Gastrocnemius medialis (tissue), 4 donors: ENCODE measurements at regions of chr1 and their contacts with region 1.

Region 1: DNA sequence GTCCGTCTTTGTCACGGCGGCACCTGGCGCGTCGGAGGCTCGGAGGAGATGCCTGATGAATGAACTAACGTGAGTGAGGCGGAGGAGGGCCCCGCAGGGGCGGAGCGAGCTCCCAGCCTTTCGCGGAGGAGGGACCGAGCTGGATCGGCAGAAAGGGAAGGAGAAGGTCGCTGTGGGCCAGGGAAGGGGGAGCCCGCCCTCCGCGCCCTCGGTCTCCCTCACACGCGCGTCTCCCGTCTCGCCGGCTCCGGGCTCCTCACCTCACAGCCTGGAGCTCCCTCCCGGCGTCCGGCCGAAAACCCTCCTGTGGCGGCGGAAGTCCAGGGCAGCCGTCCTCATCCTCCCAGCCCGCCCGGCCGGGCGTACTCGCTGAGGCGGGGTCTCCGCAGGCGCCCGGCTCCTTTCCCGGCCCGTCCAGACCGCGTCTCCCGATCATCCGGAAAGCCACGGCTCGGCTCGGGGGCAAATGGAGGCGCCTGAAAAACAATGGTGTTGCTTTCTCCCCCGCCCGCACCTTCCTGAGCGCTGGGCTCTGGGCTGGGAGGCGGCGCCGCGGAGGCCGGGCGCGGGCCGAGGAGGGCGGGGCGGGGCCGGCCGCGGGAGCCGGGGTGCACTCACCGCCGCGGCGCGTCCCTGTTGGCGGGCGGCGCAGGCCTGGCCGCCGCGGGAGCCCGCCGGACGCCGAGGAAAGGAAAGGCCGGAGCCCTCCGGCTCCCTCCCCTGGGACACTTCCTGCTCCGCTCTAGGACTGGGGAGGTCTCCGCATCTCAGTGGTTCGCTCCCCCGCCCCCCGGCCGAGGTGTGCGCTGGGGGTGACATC is at the start of gene ZNF496:
- DNase-seq: peak; percentile 84 to 88
- ATAC-seq: peak; percentile 92 to 93
- H3K4me3 ChIP-seq: peak within 1 kb of the TSS; percentile 92 to 95 (median 94)
- H3K27ac ChIP-seq: peak within 1 kb of the TSS; percentile 86 to 95 (median 90)
- H3K4me1 ChIP-seq: peaks cover 23 to 26% of the 10 kb centered on the region in 2 donors
- H3K27me3 ChIP-seq: no peaks in the 10 kb centered on the region
- CTCF ChIP-seq: no peak
- POLR2A ChIP-seq: peak in 1 of 2 donors; percentile 51
- total RNA-seq, gene ZNF496: 34.2 to 47.4 (median 39.7) TPM

Region 2: DNA sequence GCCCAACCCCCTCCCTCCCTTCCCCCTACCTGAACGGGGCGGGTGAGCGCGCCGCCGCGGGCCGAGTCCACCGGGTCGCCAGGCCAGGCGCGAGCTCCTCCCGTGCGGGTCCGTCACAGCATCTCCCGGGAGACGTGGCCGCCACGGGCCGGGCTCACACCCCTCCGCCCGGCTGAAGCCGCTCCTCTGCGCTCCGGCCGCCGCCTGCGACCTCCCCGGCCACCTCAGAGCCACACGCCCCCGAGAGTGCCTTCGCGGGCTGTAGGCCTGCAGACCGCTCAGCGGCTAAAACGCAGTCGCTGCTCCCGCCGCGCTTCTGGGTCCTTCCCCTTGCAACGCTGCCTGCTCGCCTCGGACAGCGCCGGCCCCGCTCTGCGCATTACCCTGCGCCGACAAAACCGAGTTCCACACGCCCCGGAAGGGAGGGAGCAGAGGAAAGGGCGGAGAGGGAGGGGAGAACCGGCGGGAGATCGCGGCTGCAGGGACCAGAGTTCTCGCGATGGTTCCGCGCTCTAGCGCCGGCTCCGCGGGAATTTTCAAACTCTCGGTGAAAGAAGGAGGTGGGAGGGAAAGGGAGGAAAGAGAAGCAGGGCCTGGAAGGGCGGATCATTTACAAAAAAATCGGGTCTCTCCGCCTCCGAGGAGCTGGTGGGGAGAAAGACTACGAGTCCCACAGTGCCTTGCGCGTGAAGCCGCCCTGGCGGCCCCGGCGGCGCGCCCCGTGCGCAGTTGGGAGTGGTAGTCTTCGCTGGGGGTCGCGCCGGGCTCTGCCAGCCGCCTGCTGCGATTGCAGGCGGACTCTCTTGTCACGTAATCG is 399.6 kb before region 1 on chr1 and contains the start of gene AHCTF1:
- in situ Hi-C with region 1: no loop called
- intact Hi-C with region 1: loop called (anchors 5 kb)
- DNase-seq: peak; percentile 94 to 97
- ATAC-seq: peak; percentile 95 to 96
- H3K4me3 ChIP-seq: peak within 1 kb of the TSS; percentile 89 to 100 (median 97)
- H3K27ac ChIP-seq: peak within 1 kb of the TSS; percentile 96 to 100 (median 99)
- H3K4me1 ChIP-seq: peaks cover 30 to 34% of the 10 kb centered on the region in 2 donors
- H3K27me3 ChIP-seq: no peaks in the 10 kb centered on the region
- CTCF ChIP-seq: peak in 1 of 5 experiments; percentile 10
- POLR2A ChIP-seq: peak; percentile 95 to 96
- total RNA-seq, gene AHCTF1: 21.7 to 28.5 (median 24.7) TPM

Region 3: DNA sequence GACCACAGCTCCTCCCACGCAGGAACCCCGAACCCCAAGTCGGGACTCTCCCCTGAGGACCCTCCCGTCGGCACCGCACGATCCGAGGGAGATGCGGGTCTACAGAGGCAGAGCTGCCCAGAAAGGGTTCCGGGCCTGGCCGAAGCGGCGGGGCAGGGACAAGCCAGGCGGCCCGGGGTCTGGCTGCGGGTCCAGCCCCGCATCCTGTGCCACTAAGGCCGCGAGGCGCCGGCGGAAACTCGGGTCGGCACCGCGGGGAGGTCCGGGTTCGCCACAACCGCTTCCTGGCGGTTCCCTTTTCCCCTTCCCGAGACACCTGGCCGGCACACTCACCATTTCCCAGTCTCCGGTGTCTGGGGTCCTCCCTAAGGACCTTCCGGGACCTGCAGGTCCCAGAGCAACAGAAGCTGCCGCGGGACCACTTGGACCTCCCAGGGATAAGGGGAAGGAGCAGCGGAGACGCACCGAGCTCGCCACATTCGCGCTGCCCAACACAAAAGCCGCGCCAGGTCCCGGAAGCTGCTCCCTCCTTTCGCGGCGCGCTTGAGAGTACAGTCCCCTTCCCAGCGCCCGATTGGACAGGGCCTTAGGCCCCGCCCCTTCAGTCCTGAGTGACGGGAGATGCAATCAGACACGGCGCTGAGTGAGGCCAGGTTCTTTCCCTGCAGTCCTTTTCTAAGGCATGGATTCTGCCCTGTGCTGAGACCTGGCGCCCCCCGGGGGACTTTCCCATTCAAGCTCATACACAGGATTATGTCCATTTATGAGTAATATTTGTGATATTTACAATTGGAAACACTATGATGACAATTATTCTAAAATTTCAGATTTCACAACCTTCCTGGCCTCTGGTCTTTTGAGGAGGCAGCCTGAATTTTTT is 252.9 kb before region 1 on chr1 and contains the start of gene ZNF670:
- in situ Hi-C with region 1: no loop called
- intact Hi-C with region 1: loop called (anchors 1 kb)
- DNase-seq: peak; percentile 91 to 93
- ATAC-seq: peak; percentile 100
- H3K4me3 ChIP-seq: peak within 1 kb of the TSS; percentile 78 to 100 (median 90)
- H3K27ac ChIP-seq: peak within 1 kb of the TSS; percentile 75 to 85 (median 78)
- H3K4me1 ChIP-seq: peaks cover 8 to 14% of the 10 kb centered on the region in 2 donors
- H3K27me3 ChIP-seq: no peaks in the 10 kb centered on the region
- CTCF ChIP-seq: no peak
- POLR2A ChIP-seq: peak; percentile 55 to 64
- total RNA-seq, gene ZNF670: 0.49 to 1.3 (median 0.52) TPM

Region 4: GRCh38 chr1:247210376-247211117 is 120.8 kb before region 1 on chr1:
- in situ Hi-C with region 1: no loop called
- intact Hi-C with region 1: loop called (anchors 5 kb)
- DNase-seq: peak; percentile 96 to 97
- ATAC-seq: peak; percentile 99 to 100
- H3K4me3 ChIP-seq: peak overlapping the region; percentile 73 to 98 (median 88)
- H3K27ac ChIP-seq: peak overlapping the region; percentile 77 to 89 (median 85)
- H3K4me1 ChIP-seq: peaks cover 16 to 18% of the 10 kb centered on the region in 2 donors
- H3K27me3 ChIP-seq: no peaks in the 10 kb centered on the region
- CTCF ChIP-seq: no peak
- POLR2A ChIP-seq: peak; percentile 68 to 71